ENCODE measurements at regions of chr3 and their contacts with region 1.

Region 1: GRCh38 chr3:156674046-156674910 is at the start of gene TIPARP:
- DNase-seq: peak; percentile 100
- H3K4me3 ChIP-seq: peak within 1 kb of the TSS; percentile 59 to 87 (median 82)
- H3K27ac ChIP-seq: peak within 1 kb of the TSS; percentile 96 to 98 (median 98)
- H3K4me1 ChIP-seq: peaks cover 0 to 38% (median 29%) of the 10 kb centered on the region in 4 donors
- H3K27me3 ChIP-seq: no peaks in the 10 kb centered on the region
- CTCF ChIP-seq: peak; percentile 61 to 78 (median 64)
- EP300 ChIP-seq: peak in 2 of 4 donors; percentile 25 to 45
- POLR2A ChIP-seq: peak; percentile 96 to 97
- total RNA-seq, gene TIPARP: 25.3 to 42.8 (median 27.0) TPM

Region 2: GRCh38 chr3:156151824-156152428 is 522.4 kb before region 1 on chr3:
- intact Hi-C with region 1: loop called (anchors 2 kb)
- DNase-seq: peak; percentile 85
- H3K4me3 ChIP-seq: no peak overlapping the region
- H3K27ac ChIP-seq: peak overlapping the region in 3 of 4 donors; percentile 7 to 65 (median 54)
- H3K4me1 ChIP-seq: peaks cover 0 to 44% (median 38%) of the 10 kb centered on the region in 4 donors
- H3K27me3 ChIP-seq: no peaks in the 10 kb centered on the region
- CTCF ChIP-seq: peak; percentile 48 to 64 (median 58)
- EP300 ChIP-seq: no peak
- POLR2A ChIP-seq: no peak

Region 3: GRCh38 chr3:156554842-156555687 is 119.2 kb before region 1 on chr3 and contains the start of gene SSR3:
- intact Hi-C with region 1: loop called (anchors 2 kb)
- DNase-seq: peak; percentile 100
- H3K4me3 ChIP-seq: peak within 1 kb of the TSS; percentile 73 to 91 (median 84)
- H3K27ac ChIP-seq: peak within 1 kb of the TSS; percentile 83 to 90 (median 88)
- H3K4me1 ChIP-seq: peaks cover 0 to 40% (median 36%) of the 10 kb centered on the region in 4 donors
- H3K27me3 ChIP-seq: no peaks in the 10 kb centered on the region
- CTCF ChIP-seq: peak; percentile 46 to 78 (median 60)
- EP300 ChIP-seq: peak in 1 of 4 donors; percentile 6
- POLR2A ChIP-seq: peak; percentile 85 to 92
- total RNA-seq, gene SSR3: 78.1 to 113 (median 90.4) TPM

Region 4: DNA sequence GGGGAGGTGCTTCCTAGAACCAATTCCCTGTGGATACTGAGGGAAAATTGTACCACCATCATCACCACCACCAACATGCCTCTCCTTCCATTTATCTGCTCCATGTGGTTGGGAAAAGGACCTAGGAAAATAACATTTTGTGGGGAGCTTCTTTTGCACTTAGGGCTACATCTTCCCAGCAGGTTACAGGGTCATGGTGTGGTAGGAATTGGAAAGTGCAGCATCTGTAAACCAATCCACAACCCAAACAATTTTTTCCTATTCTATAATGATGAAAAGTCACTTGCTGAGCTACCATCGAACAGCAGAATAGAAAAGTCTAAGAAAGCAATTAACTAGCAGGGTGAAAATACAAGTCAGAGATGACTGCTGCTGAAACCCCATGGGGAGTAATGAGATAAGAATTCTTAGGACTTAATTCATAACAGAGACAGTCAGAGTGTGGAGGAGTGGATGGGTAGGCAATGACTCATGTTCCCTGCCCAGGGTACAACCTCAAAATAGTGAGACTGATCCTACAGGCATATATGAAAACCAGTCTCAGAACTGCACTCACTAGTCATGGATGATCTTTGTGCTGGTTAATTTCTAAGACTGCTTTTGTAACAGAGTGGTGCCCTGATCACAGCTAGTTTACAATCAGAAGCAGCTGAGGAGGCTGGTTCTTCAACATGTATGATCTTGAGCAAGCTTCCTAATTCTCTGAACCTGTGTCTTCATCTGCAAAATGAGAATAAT is 113.8 kb after region 1 on chr3:
- intact Hi-C with region 1: no loop called
- DNase-seq: no peak
- H3K4me3 ChIP-seq: no peak overlapping the region
- H3K27ac ChIP-seq: no peak overlapping the region
- H3K4me1 ChIP-seq: peaks cover 0 to 6% (median 0%) of the 10 kb centered on the region in 4 donors
- H3K27me3 ChIP-seq: no peaks in the 10 kb centered on the region
- CTCF ChIP-seq: no peak
- EP300 ChIP-seq: no peak
- POLR2A ChIP-seq: no peak

Region 5: DNA sequence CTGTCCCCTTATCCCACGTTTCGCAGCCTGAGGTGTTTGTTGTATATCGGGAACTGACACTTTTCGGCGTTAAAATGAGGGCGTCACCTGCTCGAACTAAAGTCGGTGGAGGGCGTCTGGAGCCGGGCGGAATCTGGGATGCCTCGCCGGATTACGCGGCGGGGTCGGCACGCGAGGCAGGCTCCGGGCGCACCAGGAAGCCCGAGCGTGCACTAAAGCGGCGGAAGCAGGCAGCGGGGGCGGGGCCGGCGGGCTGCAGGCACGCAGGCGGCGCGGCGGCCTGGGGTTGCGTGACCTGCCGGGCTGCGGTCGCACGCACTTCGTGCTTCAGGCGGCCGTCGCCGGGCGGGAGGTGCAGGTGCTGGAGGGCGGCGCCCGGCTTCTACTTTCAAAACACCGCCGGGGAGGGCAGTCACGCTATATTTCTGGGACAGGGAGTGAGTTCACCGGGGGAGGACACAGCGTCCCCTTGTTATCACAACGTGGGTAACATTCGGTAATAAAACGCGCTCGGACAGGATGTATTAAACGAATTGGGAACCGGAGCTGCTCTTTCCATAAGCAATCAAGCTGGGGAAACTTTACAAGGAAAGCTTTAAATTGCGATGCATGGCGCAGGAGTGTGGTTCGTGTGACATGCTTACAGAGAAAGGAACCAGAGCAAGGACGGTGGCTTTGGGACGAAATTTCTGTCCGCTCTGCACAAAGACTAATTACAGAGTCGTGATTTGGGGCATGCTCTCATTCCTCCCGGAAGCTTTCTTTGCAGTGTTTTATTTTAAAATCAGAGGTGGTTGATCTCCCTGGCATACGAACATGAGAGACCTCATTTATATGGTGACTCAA is 142.7 kb after region 1 on chr3:
- intact Hi-C with region 1: loop called (anchors 2 kb)
- DNase-seq: peak; percentile 85
- H3K4me3 ChIP-seq: peak overlapping the region; percentile 55 to 65 (median 61)
- H3K27ac ChIP-seq: peak overlapping the region; percentile 74 to 85 (median 82)
- H3K4me1 ChIP-seq: peaks cover 0 to 20% (median 9%) of the 10 kb centered on the region in 4 donors
- H3K27me3 ChIP-seq: no peaks in the 10 kb centered on the region
- CTCF ChIP-seq: no peak
- EP300 ChIP-seq: peak in 3 of 4 donors; percentile 55 to 87 (median 83)
- POLR2A ChIP-seq: no peak

Region 6: DNA sequence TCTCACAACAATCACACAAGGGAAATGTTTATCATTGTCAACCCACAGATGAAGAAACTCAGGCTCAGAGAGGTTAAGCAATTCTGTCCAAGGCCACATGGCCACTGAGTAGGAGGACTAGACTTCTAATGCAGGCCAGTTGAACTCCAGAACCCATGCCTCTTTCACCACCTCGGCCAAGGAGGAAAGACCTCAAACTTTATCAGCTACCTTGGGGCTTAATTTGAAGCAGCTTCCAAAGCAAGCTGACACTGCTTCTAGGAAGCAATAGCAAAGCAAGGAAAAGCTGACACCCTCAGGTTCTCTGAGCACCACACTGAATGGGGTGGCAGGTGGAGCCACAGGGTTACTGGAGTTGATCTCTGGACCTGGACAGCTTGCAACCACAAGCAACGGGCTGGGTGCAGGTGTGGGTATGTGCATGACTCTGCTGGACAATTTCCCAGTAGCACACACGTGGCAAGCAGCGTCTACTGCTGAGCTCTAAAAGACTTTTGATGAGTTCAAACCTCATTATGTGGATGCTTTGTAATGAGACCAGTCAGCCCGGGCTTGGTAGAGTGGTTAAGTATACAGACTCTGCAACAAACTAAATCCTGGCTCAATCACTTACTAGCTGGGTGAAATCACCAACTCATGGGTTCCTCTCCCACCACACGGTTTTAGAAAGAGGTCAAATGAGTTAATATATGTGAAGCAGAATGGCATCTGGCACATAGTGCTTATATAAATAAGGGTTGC is 462.5 kb after region 1 on chr3:
- intact Hi-C with region 1: loop called (anchors 1 kb)
- DNase-seq: no peak
- H3K4me3 ChIP-seq: no peak overlapping the region
- H3K27ac ChIP-seq: peak overlapping the region; percentile 31 to 75 (median 68)
- H3K4me1 ChIP-seq: peaks cover 0 to 40% (median 21%) of the 10 kb centered on the region in 4 donors
- H3K27me3 ChIP-seq: no peaks in the 10 kb centered on the region
- CTCF ChIP-seq: no peak
- EP300 ChIP-seq: no peak
- POLR2A ChIP-seq: no peak